ENCODE measurements at regions of chr6 and their contacts with region 1.

Region 1: GRCh38 chr6:7129784-7130569 is 22.2 kb downstream of the RREB1 start:
- DNase-seq: peak in 3 of 14 experiments; percentile 33 to 66 (median 64)
- ATAC-seq: peak; percentile 33
- H3K4me3 ChIP-seq: no peak overlapping the region
- H3K4me3 Mint-ChIP-seq: peak overlapping the region; percentile 52
- H3K27ac ChIP-seq: peak overlapping the region in 1 of 2 donors; percentile 39
- H3K27ac Mint-ChIP-seq: peak overlapping the region; percentile 82
- H3K4me1 ChIP-seq: peaks cover 52% of the 10 kb centered on the region
- H3K4me1 Mint-ChIP-seq: peaks cover 92% of the 10 kb centered on the region
- H3K27me3 ChIP-seq: no peaks in the 10 kb centered on the region
- H3K27me3 Mint-ChIP-seq: no peaks in the 10 kb centered on the region
- CTCF ChIP-seq: no peak

Region 2: GRCh38 chr6:7062451-7063162 is 67.4 kb before region 1 on chr6:
- CTCF ChIA-PET with region 1: no interaction called
- POLR2A ChIA-PET with region 1: no interaction called
- intact Hi-C with region 1: no loop called
- DNase-seq: no peak
- ATAC-seq: no peak
- H3K4me3 ChIP-seq: no peak overlapping the region
- H3K4me3 Mint-ChIP-seq: no peak overlapping the region
- H3K27ac ChIP-seq: no peak overlapping the region
- H3K27ac Mint-ChIP-seq: no peak overlapping the region
- H3K4me1 ChIP-seq: no peaks in the 10 kb centered on the region
- H3K4me1 Mint-ChIP-seq: no peaks in the 10 kb centered on the region
- H3K27me3 ChIP-seq: no peaks in the 10 kb centered on the region
- H3K27me3 Mint-ChIP-seq: no peaks in the 10 kb centered on the region
- CTCF ChIP-seq: no peak

Region 3: DNA sequence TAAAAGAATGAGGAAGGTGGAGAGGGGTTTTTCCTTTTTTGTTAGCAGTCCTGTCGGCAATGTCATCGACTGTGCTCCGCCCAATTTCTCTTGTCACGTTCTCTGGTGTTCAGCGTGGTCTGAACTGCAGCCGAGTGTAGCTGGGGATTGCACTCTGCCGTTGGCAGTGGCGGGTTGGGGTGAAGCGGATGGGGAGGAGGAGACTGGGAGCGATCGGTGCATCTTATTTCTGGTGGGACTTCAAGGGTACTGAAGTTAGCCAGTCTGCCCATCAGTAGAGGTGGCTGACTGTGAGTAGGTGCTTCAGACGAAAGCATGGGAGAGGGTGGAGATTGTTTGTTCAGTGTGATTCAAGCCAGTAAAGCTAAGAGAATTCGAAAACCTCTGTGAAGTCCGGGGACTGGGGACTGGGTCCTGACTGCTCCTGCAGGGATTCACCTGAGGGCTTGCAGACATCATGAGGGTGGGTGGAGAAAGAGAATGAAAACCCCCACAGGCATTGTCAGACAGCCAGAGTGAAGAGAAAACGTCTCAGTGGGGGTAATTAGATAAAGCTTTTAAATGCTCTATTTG is 17.1 kb before region 1 on chr6:
- CTCF ChIA-PET with region 1: interaction called, 4 read pairs
- POLR2A ChIA-PET with region 1: interaction called, 85 read pairs
- intact Hi-C with region 1: loop called in 1 of 2 experiments (anchors 2 kb)
- DNase-seq: peak in 13 of 14 experiments; percentile 22 to 84 (median 53)
- ATAC-seq: peak; percentile 70
- H3K4me3 ChIP-seq: no peak overlapping the region
- H3K4me3 Mint-ChIP-seq: peak overlapping the region; percentile 88
- H3K27ac ChIP-seq: peak overlapping the region in 1 of 2 donors; percentile 33
- H3K27ac Mint-ChIP-seq: peak overlapping the region; percentile 87
- H3K4me1 ChIP-seq: peaks cover 45% of the 10 kb centered on the region
- H3K4me1 Mint-ChIP-seq: peaks cover 76% of the 10 kb centered on the region
- H3K27me3 ChIP-seq: no peaks in the 10 kb centered on the region
- H3K27me3 Mint-ChIP-seq: no peaks in the 10 kb centered on the region
- CTCF ChIP-seq: no peak

Measured in CD4-positive, alpha-beta T cell (primary cell).